GM13977 (cell line): ENCODE measurements at regions of chr3 and their contacts with region 1.

Region 1: DNA sequence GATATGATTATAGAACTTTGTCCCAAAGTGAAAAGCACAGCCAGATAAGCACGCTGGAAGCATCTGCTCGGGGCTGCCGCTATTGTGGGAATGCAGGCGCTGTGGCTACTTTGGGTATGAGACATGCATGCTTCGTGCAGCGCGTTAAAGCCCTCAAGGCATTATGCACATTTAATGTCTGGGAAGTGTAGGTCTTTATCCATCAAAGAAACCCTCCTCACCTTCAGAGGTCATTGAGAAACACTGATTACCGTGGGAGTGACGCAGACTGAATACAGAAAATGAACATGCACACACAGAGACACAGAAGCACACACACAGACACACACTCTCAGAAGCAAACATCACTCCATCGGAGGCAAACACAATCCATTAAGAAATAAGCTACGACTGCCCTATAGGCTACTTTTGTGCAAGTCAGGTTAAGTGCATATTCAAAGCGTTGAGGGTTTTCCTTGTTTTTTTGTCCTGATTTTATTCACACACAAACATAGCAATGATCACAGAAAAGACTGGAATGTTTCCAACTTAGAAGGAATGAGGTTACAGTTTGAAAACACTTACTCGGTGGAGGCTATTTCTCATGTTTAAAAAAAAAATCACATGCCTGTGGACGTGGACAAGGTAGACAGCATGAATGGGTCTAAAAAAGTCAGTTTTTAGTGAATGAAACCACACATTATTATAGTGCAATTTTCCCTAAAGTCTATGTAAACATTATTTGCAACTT is 68.5 kb downstream of the PLCH1 start:
- DNase-seq: no peak
- CTCF ChIP-seq: no peak

Region 2: DNA sequence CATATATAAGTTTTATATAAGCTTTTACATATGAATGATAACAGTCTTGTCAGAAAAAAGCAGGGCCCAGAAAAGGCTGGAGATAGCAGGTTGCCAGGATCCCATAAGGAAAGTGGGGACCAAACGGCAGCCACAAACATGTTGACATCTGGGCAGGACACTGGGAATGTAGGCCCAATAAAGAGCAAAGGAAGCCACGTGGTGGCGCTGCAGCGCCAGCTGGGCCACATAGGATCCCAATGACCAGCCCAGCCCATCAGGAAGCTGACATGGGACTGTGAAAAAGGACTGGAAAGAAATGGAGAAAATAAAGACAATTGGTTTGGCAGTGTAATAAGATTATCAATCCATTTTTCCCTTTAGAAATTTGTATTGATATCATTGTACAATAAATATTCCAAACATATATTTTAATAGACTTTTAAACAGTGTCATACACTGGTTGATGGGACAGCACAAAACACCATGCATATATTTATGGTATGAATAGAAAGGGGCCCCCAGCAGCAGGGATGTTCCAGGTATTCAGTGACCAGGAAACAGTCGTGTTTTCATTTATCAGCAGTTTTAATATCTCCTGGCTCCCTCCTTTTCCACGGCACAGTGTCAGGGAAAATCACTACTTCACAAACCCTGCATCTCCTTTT is 293.9 kb before region 1 on chr3:
- in situ Hi-C with region 1: loop called (anchors 25 kb)
- DNase-seq: peak; percentile 8
- CTCF ChIP-seq: peak; percentile 65

Region 3: DNA sequence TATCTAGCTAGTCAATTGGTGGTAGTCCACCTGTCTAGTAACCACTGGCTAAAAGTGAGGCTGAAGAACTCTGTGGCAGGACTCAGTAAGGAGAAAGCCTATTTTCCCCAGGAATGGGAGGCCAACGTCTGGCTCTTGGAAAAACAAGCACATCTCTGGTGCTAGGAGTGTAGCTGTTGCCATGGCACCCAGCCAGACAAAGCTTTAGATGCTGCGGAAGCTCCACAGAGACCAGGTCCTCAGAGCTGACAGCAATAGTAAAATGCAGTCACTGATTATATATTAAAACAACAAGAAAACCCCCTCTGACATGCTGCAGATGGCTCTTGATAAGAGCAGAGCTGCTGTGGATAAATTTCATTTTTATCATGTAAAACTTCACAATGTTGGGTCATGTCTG is 258.0 kb before region 1 on chr3:
- in situ Hi-C with region 1: no loop called
- DNase-seq: no peak
- CTCF ChIP-seq: no peak